H1 (cell line): ENCODE measurements at regions of chr1 and their contacts with region 1.

Region 1: GRCh38 chr1:62391369-62391971 is 45.4 kb upstream of the USP1 start:
- DNase-seq: peak; percentile 23 to 82
- H3K4me3 ChIP-seq: no peak overlapping the region
- H3K27ac ChIP-seq: no peak overlapping the region
- H3K4me1 ChIP-seq: no peaks in the 10 kb centered on the region; a peak in 1 of 7 replicates
- H3K27me3 ChIP-seq: no peaks in the 10 kb centered on the region
- CTCF ChIP-seq: peak; percentile 58 to 96 (median 92)
- EP300 ChIP-seq: no peak
- POLR2A ChIP-seq: no peak
- RAD21 ChIP-seq: peak; percentile 67 to 82

Region 2: DNA sequence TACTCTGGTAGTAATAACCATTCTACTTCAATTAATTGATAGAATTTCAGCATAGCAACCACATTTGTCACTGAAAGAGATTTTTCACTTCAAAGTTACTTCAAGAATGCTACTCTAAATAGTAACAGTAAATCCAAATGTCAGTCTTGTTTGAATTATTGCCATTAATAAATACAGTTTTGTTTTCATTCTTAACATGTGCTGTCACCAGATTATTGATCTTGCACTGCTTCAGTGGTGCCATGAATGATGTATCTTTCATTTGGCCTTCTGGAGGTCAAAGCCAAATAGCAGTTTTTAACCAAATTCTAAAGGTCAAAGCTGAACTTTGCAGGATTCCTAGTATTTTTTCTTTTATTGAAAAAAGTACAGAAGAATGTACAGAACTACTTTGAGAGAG is 449.7 kb before region 1 on chr1:
- CTCF ChIA-PET with region 1: no interaction called
- POLR2A ChIA-PET with region 1: no interaction called
- DNase-seq: no peak
- H3K4me3 ChIP-seq: no peak overlapping the region
- H3K27ac ChIP-seq: no peak overlapping the region
- H3K4me1 ChIP-seq: no peaks in the 10 kb centered on the region
- H3K27me3 ChIP-seq: no peaks in the 10 kb centered on the region
- CTCF ChIP-seq: no peak
- EP300 ChIP-seq: no peak
- POLR2A ChIP-seq: no peak
- RAD21 ChIP-seq: no peak

Region 3: DNA sequence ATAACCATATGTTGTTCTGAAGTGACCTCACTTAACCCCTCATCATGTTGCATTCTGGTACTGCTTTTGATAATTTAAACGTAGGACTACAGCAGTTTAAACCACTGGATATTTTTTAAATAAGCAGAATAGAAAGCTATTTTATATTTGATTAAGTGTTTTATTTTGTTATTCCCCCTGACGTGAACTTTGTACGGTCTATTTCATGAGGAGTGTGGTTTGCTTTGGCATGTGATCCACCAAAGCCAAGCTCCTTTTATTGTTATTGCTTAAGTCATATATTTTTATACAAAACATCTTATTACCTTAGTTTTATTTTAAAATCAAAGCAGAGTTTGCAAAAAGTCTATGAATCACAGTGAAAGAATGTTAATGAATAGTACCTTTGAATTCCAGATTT is 298.2 kb before region 1 on chr1:
- CTCF ChIA-PET with region 1: no interaction called
- POLR2A ChIA-PET with region 1: no interaction called
- DNase-seq: no peak
- H3K4me3 ChIP-seq: no peak overlapping the region
- H3K27ac ChIP-seq: no peak overlapping the region
- H3K4me1 ChIP-seq: no peaks in the 10 kb centered on the region
- H3K27me3 ChIP-seq: no peaks in the 10 kb centered on the region
- CTCF ChIP-seq: no peak
- EP300 ChIP-seq: no peak
- POLR2A ChIP-seq: no peak
- RAD21 ChIP-seq: no peak

Region 4: DNA sequence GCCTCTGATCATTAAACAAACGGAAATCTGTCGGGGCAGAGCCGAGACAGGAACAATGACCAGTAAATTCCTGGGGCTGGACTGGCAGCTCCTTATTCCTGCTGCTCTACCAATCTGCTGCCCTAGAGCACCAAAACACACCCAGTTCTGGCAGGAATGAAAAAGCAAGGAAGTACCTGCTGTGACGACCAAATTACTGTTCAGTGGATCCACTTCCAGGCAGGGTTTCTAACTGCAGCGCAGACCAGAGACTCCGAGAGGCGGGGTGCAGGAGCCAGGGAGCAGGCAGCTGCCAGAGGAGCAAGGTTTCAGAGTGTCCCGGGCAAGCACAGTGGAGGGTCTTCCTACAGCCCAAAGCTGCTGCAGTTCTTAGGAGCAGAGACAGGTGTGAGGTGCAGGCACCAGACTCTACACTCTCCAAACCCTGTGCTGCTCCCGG is 104.7 kb before region 1 on chr1:
- CTCF ChIA-PET with region 1: interaction called, 12 read pairs
- POLR2A ChIA-PET with region 1: no interaction called
- DNase-seq: peak; percentile 36 to 69
- H3K4me3 ChIP-seq: peak overlapping the region in 3 of 4 experiments; percentile 14 to 40 (median 27); a peak in 6 of 8 replicates
- H3K27ac ChIP-seq: no peak overlapping the region
- H3K4me1 ChIP-seq: peaks cover 10 to 20% (median 15%) of the 10 kb centered on the region in 4 experiments
- H3K27me3 ChIP-seq: peaks cover 12 to 60% (median 45%) of the 10 kb centered on the region in 4 experiments
- CTCF ChIP-seq: no peak
- EP300 ChIP-seq: no peak
- POLR2A ChIP-seq: no peak
- RAD21 ChIP-seq: peak in 1 of 2 experiments; percentile 17; a peak in 1 of 4 replicates

Region 5: DNA sequence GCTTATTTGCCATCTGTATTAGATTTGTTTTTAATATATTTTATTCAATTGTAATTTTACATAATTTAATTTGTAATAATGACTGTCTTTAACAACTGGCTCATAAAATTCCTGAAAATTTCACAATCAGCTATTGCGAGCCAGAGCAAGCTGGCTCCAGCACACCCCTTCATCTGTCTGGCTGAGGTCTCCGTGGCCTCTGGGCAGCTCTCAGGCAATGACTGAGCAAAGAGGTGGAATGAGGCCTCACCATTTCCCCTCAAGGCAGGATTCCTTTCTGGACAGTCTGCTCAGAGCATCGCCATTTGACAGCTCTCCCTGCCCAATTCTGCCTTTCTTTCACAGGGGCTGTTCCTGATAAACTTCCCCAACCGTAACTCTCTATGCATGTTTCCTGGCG is 66.4 kb before region 1 on chr1:
- CTCF ChIA-PET with region 1: interaction called, 11 read pairs
- POLR2A ChIA-PET with region 1: no interaction called
- DNase-seq: no peak
- H3K4me3 ChIP-seq: no peak overlapping the region
- H3K27ac ChIP-seq: no peak overlapping the region
- H3K4me1 ChIP-seq: peaks cover 0 to 6% (median 3%) of the 10 kb centered on the region in 4 experiments; a peak in 3 of 7 replicates
- H3K27me3 ChIP-seq: peaks cover 0 to 4% (median 4%) of the 10 kb centered on the region in 4 experiments; a peak in 6 of 7 replicates
- CTCF ChIP-seq: no peak
- EP300 ChIP-seq: no peak
- POLR2A ChIP-seq: no peak
- RAD21 ChIP-seq: no peak

Region 6: DNA sequence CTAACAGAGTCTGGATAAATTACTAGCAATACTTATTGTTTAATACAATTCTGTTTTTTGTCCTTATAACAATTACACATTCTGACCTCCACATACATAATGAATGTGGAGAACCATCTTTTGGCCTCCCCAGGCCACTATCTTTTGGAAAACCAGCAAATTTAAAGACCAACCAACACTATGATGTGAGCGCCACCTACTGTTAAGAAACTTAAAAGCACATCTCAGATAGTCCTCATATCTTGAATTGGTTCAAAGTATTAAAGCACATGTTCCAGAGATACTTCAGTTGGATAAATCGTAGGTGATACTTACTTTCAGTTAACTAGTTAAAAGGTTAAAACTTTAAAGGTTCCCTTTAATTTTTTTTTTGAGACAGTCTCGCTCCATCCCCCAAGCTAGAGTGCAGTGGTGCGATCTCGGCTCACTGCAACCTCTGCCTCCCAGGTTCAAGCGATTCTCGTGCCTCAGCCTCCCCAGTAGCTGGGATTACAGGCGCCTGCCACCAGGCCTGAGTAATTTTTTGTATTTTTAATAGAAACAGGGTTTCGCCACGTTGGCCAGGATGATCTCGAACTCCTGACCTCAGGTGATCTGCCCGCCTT is 16.0 kb after region 1 on chr1:
- CTCF ChIA-PET with region 1: interaction called, 191 read pairs
- POLR2A ChIA-PET with region 1: interaction called, 3 read pairs
- DNase-seq: no peak
- H3K4me3 ChIP-seq: no peak overlapping the region
- H3K27ac ChIP-seq: no peak overlapping the region
- H3K4me1 ChIP-seq: peaks cover 0 to 5% (median 2%) of the 10 kb centered on the region in 4 experiments; a peak in 4 of 7 replicates
- H3K27me3 ChIP-seq: peaks cover 0 to 3% (median 0%) of the 10 kb centered on the region in 4 experiments; a peak in 1 of 7 replicates
- CTCF ChIP-seq: peak in 2 of 3 experiments; percentile 63 to 74; a peak in 3 of 4 replicates
- EP300 ChIP-seq: no peak
- POLR2A ChIP-seq: no peak
- RAD21 ChIP-seq: peak; percentile 91 to 93

Region 7: GRCh38 chr1:62514746-62515423 is 123.4 kb after region 1 on chr1:
- CTCF ChIA-PET with region 1: no interaction called
- POLR2A ChIA-PET with region 1: no interaction called
- DNase-seq: no peak
- H3K4me3 ChIP-seq: no peak overlapping the region
- H3K27ac ChIP-seq: no peak overlapping the region
- H3K4me1 ChIP-seq: no peaks in the 10 kb centered on the region
- H3K27me3 ChIP-seq: no peaks in the 10 kb centered on the region
- CTCF ChIP-seq: no peak
- EP300 ChIP-seq: no peak
- POLR2A ChIP-seq: no peak
- RAD21 ChIP-seq: no peak

Region 8: GRCh38 chr1:62765981-62766380 is 374.5 kb after region 1 on chr1:
- CTCF ChIA-PET with region 1: no interaction called
- POLR2A ChIA-PET with region 1: no interaction called
- DNase-seq: no peak
- H3K4me3 ChIP-seq: no peak overlapping the region
- H3K27ac ChIP-seq: no peak overlapping the region
- H3K4me1 ChIP-seq: peaks cover 0 to 3% (median 0%) of the 10 kb centered on the region in 4 experiments; a peak in 1 of 7 replicates
- H3K27me3 ChIP-seq: no peaks in the 10 kb centered on the region
- CTCF ChIP-seq: no peak
- EP300 ChIP-seq: no peak
- POLR2A ChIP-seq: no peak
- RAD21 ChIP-seq: no peak